SK-N-SH (cell line): ENCODE measurements at regions of chr3 and their contacts with region 1.

Region 1: DNA sequence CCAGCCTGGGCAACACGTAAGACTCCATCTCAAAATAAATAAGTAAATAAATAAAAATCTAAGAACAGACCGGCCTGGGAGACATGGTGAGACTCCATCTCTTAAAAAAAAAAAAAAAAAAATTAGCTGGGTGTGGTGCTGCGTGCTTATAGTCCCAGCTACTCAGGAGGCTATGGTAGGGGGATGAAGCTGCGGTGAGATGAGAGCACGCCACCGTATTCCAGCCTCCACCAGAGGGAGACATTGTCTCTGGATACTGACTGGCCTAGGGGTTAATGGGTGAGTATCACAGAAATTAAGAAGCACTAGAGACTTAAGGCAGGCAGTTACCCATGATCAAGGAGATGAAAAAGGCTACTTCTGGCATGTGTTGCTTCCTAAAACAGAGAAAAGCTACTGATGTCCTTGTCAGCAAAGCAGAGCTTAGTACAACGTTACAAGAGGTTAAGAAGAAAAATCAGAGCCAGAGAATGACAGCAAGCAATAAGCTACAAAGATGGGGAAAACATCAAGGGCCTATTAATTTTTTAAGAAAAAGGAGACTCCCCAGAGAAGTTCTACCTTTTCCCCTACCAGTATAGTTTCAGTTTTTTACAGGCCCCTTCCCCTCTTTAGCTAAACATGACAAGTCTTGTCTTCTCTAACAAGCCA is 8.6 kb downstream of the TFRC start:
- DNase-seq: peak; percentile 77
- H3K4me3 ChIP-seq: no peak overlapping the region; a peak in 1 of 4 replicates
- H3K27ac ChIP-seq: no peak overlapping the region
- H3K4me1 ChIP-seq: no peaks in the 10 kb centered on the region
- H3K27me3 ChIP-seq: no peaks in the 10 kb centered on the region
- CTCF ChIP-seq: peak; percentile 91
- EP300 ChIP-seq: no peak
- RAD21 ChIP-seq: peak; percentile 93

Region 2: GRCh38 chr3:196055683-196056270 is 17.5 kb before region 1 on chr3:
- CTCF ChIA-PET with region 1: interaction called, 22 read pairs
- POLR2A ChIA-PET with region 1: interaction called, 3 read pairs
- DNase-seq: no peak
- H3K4me3 ChIP-seq: no peak overlapping the region
- H3K27ac ChIP-seq: no peak overlapping the region
- H3K4me1 ChIP-seq: peaks cover 0 to 11% of the 10 kb centered on the region in 2 experiments; a peak in 2 of 4 replicates
- H3K27me3 ChIP-seq: no peaks in the 10 kb centered on the region
- CTCF ChIP-seq: no peak
- EP300 ChIP-seq: no peak
- RAD21 ChIP-seq: no peak

Region 3: GRCh38 chr3:196124611-196125010 is 51.3 kb after region 1 on chr3:
- CTCF ChIA-PET with region 1: no interaction called
- POLR2A ChIA-PET with region 1: no interaction called
- DNase-seq: no peak
- H3K4me3 ChIP-seq: no peak overlapping the region
- H3K27ac ChIP-seq: no peak overlapping the region
- H3K4me1 ChIP-seq: peaks cover 0 to 7% of the 10 kb centered on the region in 2 experiments; a peak in 1 of 4 replicates
- H3K27me3 ChIP-seq: no peaks in the 10 kb centered on the region; the same call in 1 of the 2 replicates
- CTCF ChIP-seq: no peak
- EP300 ChIP-seq: no peak
- RAD21 ChIP-seq: no peak

Region 4: GRCh38 chr3:196186651-196187573 is 113.6 kb after region 1 on chr3:
- CTCF ChIA-PET with region 1: interaction called, 258 read pairs
- POLR2A ChIA-PET with region 1: no interaction called
- DNase-seq: peak; percentile 83
- H3K4me3 ChIP-seq: no peak overlapping the region
- H3K27ac ChIP-seq: peak overlapping the region in 1 of 2 experiments; percentile 64; a peak in 2 of 4 replicates
- H3K4me1 ChIP-seq: peaks cover 0 to 10% of the 10 kb centered on the region in 2 experiments; a peak in 1 of 4 replicates
- H3K27me3 ChIP-seq: no peaks in the 10 kb centered on the region
- CTCF ChIP-seq: no peak
- EP300 ChIP-seq: peak in 1 of 2 experiments; percentile 28; a peak in 1 of 4 replicates
- RAD21 ChIP-seq: no peak

Region 5: GRCh38 chr3:196192036-196192523 is 118.8 kb after region 1 on chr3:
- CTCF ChIA-PET with region 1: interaction called, 258 read pairs
- POLR2A ChIA-PET with region 1: interaction called, 7 read pairs
- DNase-seq: peak; percentile 11
- H3K4me3 ChIP-seq: no peak overlapping the region
- H3K27ac ChIP-seq: no peak overlapping the region; a peak in 1 of 4 replicates
- H3K4me1 ChIP-seq: peaks cover 0 to 30% of the 10 kb centered on the region in 2 experiments; a peak in 1 of 4 replicates
- H3K27me3 ChIP-seq: no peaks in the 10 kb centered on the region
- CTCF ChIP-seq: no peak
- EP300 ChIP-seq: no peak
- RAD21 ChIP-seq: no peak

Region 6: GRCh38 chr3:196202516-196202970 is 129.2 kb after region 1 on chr3:
- CTCF ChIA-PET with region 1: interaction called, 258 read pairs
- POLR2A ChIA-PET with region 1: interaction called, 3 read pairs
- DNase-seq: no peak
- H3K4me3 ChIP-seq: no peak overlapping the region
- H3K27ac ChIP-seq: no peak overlapping the region
- H3K4me1 ChIP-seq: peaks cover 0 to 3% of the 10 kb centered on the region in 2 experiments; a peak in 1 of 4 replicates
- H3K27me3 ChIP-seq: no peaks in the 10 kb centered on the region
- CTCF ChIP-seq: no peak
- EP300 ChIP-seq: no peak
- RAD21 ChIP-seq: no peak